PC-3 (cell line): ENCODE measurements at regions of chr5 and their contacts with region 1.

Region 1: GRCh38 chr5:103375350-103375749 is 116.8 kb downstream of the MACIR start:
- DNase-seq: peak; percentile 77
- ATAC-seq: peak; percentile 82
- H3K4me3 ChIP-seq: no peak overlapping the region
- H3K27ac ChIP-seq: no peak overlapping the region
- H3K4me1 ChIP-seq: peaks cover 16% of the 10 kb centered on the region
- H3K27me3 ChIP-seq: no peaks in the 10 kb centered on the region
- CTCF ChIP-seq: peak; percentile 71

Region 2: GRCh38 chr5:103243665-103244064 is 131.7 kb before region 1 on chr5:
- CTCF ChIA-PET with region 1: no interaction called
- POLR2A ChIA-PET with region 1: no interaction called
- intact Hi-C with region 1: no loop called
- DNase-seq: no peak
- ATAC-seq: no peak
- H3K4me3 ChIP-seq: no peak overlapping the region
- H3K27ac ChIP-seq: no peak overlapping the region
- H3K4me1 ChIP-seq: no peaks in the 10 kb centered on the region
- H3K27me3 ChIP-seq: no peaks in the 10 kb centered on the region
- CTCF ChIP-seq: no peak

Region 3: DNA sequence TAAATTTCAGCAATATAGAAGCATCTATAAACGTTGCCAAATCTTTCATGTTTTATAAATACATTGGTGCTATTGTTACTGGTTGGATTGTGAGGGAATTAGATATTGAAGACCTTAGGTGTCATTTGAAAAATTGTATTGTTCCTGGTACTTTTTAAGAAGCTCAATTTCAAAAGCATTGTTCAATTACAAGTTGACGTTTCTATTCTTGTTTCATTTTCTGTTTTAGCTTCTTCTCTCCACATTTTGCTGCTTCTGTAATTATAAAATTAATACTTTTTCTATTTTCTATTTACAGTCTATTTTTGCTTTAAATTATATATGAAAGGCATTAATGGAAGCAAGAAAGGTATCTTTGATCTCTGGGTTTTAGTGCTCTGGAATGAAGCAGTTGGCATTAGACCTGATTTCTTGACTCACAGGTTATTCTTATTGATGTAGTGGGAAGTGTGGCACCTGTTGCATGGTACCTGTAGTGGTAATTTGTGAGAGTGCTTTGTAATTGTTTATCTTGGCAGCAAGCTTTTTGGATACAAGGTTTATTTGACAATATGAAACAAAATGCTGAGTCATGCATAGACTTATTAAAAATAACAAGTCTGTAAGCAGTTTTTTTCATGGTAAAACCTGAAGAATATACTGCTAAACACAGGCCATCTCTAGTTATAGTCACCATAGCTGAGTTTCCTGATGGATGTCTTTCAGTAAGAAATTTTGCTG is 103.6 kb before region 1 on chr5:
- CTCF ChIA-PET with region 1: no interaction called
- POLR2A ChIA-PET with region 1: no interaction called
- intact Hi-C with region 1: loop called (anchors 5 kb)
- DNase-seq: peak; percentile 93
- ATAC-seq: peak; percentile 76
- H3K4me3 ChIP-seq: no peak overlapping the region
- H3K27ac ChIP-seq: peak overlapping the region; percentile 23
- H3K4me1 ChIP-seq: peaks cover 41% of the 10 kb centered on the region
- H3K27me3 ChIP-seq: no peaks in the 10 kb centered on the region
- CTCF ChIP-seq: no peak

Region 4: DNA sequence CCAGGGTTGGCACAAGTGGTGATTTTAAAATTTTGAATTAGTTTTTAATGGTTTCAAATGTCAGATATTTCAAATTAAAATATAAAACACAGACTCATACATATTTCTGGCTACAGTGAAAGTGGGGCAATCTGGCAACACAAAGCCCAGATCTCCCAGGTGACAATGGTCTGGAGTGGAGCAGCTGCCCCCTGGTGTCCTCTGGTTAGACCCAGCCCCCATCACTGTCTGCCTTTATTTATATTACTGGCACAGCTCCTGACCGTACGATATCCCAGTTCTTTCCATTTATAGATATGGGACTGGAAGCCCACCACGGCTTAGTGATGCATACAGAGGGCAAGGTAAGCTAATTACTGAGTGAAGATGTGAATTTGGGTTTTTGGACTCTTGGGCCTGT is 79.5 kb before region 1 on chr5:
- CTCF ChIA-PET with region 1: no interaction called
- POLR2A ChIA-PET with region 1: no interaction called
- intact Hi-C with region 1: no loop called
- DNase-seq: no peak
- ATAC-seq: no peak
- H3K4me3 ChIP-seq: no peak overlapping the region
- H3K27ac ChIP-seq: no peak overlapping the region
- H3K4me1 ChIP-seq: no peaks in the 10 kb centered on the region
- H3K27me3 ChIP-seq: no peaks in the 10 kb centered on the region
- CTCF ChIP-seq: no peak; the same call in 1 of the 2 replicates

Region 5: GRCh38 chr5:103464835-103465484 is 89.6 kb after region 1 on chr5:
- CTCF ChIA-PET with region 1: no interaction called
- POLR2A ChIA-PET with region 1: no interaction called
- intact Hi-C with region 1: loop called (anchors 5 kb)
- DNase-seq: peak; percentile 33
- ATAC-seq: no peak
- H3K4me3 ChIP-seq: no peak overlapping the region
- H3K27ac ChIP-seq: no peak overlapping the region
- H3K4me1 ChIP-seq: peaks cover 61% of the 10 kb centered on the region
- H3K27me3 ChIP-seq: no peaks in the 10 kb centered on the region
- CTCF ChIP-seq: no peak; the same call in 1 of the 2 replicates